Aorta (tissue), 5 donors: ENCODE measurements at regions of chr1 and their contacts with region 1.

Region 1: DNA sequence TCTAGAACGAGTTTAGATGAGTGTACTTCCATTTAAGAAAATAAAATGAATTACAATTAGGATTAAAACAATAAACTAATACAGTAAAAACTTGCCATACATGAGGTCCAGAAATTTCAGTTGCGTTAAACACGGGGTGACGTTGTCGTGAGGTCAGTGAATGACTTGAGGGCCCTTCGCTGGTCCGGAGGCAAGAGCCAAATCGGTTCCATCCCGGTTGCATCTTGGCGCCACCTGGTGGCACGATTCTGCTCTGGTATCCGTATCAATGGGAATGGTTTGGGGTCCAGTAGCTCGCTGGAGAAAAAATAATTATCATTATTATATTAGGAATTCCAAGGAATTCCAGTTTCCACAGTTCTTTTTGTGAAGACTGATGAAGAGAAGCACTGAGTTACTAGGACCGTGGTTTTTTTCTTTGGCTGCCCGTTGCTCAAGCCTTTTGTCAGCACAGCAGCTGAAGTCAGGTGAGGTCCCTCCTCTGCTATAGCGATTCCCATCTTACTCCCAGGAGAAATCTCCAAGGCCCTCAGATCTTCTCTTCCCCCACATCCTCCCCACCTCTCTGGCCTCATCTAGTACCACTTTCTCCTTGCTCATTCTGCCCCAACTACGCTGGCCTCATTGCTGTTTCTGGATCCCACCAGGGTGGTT is 161.4 kb downstream of the SLC35F3 start:
- DNase-seq: peak; percentile 77 to 92
- ATAC-seq: peak; percentile 67
- H3K4me3 ChIP-seq: no peak overlapping the region
- H3K27ac ChIP-seq: no peak overlapping the region
- H3K4me1 ChIP-seq: no peaks in the 10 kb centered on the region
- H3K27me3 ChIP-seq: no peaks in the 10 kb centered on the region

Region 2: GRCh38 chr1:233440951-233441401 is 624.9 kb before region 1 on chr1:
- intact Hi-C with region 1: loop called in 1 of 2 experiments (anchors 2 kb)
- DNase-seq: no peak
- ATAC-seq: peak; percentile 36
- H3K4me3 ChIP-seq: no peak overlapping the region
- H3K27ac ChIP-seq: no peak overlapping the region
- H3K4me1 ChIP-seq: no peaks in the 10 kb centered on the region
- H3K27me3 ChIP-seq: no peaks in the 10 kb centered on the region

Region 3: DNA sequence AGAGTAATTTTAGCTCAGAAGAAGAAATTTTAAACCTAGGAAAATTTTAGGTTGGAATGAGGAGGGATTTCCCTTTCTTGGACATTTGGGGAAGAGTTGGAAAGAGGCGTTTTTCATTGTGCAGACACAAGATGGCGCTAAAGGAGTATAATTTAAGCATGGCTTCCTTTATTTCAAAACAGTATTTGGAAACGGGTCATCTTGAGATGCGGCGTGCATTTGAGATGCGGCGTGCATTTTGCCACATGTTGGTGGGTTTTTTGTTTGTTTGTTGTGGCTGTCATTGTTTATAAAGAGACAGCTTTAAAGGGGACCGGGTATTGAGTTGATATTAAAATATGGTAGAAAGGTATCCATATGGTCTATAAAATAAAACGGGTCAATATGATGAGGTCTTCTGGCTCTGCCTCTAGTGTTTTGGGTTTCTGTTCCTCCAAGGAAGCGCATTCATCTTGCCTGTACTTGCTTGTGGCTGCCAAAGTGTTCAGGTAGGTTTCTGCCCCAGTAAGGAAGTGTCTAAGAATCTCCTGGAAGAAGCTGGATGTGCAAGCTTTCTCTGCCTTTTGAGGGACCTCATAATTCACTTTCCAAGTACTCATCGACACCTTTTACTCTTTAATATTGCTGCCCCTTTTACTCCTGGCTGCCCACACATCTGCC is 48.9 kb after region 1 on chr1:
- intact Hi-C with region 1: no loop called
- DNase-seq: no peak
- ATAC-seq: peak; percentile 68
- H3K4me3 ChIP-seq: peak overlapping the region in 1 of 2 donors; percentile 26
- H3K27ac ChIP-seq: no peak overlapping the region
- H3K4me1 ChIP-seq: peaks cover 0 to 4% of the 10 kb centered on the region in 2 donors
- H3K27me3 ChIP-seq: no peaks in the 10 kb centered on the region